B cell (primary cell): ENCODE measurements at regions of chr9 and their contacts with region 1.

Region 1: DNA sequence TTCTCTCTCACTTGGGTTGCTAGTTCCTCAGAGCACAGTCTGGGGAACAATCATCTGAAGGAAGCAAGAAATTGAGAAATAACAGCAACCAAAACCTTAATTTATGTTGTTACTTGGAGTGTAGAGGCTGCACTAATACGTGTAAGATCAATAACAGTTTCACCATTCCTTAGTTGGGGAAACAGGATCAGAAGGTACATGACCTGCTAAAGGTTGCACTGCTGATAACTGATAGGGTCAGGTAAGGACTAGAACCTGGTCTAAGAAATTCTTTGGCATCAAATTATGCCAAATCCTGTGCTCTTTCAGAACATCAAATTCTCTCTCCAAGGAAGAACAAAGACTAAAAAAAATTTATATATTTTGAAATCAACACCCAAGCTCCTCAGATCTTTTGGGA is 278.6 kb upstream of the C9orf72 start:
- DNase-seq: no peak
- ATAC-seq: no peak
- H3K4me3 ChIP-seq: no peak overlapping the region
- H3K4me3 Mint-ChIP-seq: no peak overlapping the region
- H3K27ac ChIP-seq: no peak overlapping the region
- H3K27ac Mint-ChIP-seq: no peak overlapping the region
- H3K4me1 ChIP-seq: no peaks in the 10 kb centered on the region
- H3K4me1 Mint-ChIP-seq: no peaks in the 10 kb centered on the region
- H3K27me3 ChIP-seq: no peaks in the 10 kb centered on the region
- H3K27me3 Mint-ChIP-seq: no peaks in the 10 kb centered on the region
- CTCF ChIP-seq: no peak

Region 2: GRCh38 chr9:27817747-27818146 is 34.1 kb before region 1 on chr9:
- CTCF ChIA-PET with region 1: no interaction called
- POLR2A ChIA-PET with region 1: no interaction called
- intact Hi-C with region 1: no loop called
- DNase-seq: no peak
- ATAC-seq: no peak
- H3K4me3 ChIP-seq: no peak overlapping the region
- H3K4me3 Mint-ChIP-seq: no peak overlapping the region
- H3K27ac ChIP-seq: no peak overlapping the region
- H3K27ac Mint-ChIP-seq: no peak overlapping the region
- H3K4me1 ChIP-seq: no peaks in the 10 kb centered on the region
- H3K4me1 Mint-ChIP-seq: no peaks in the 10 kb centered on the region
- H3K27me3 ChIP-seq: no peaks in the 10 kb centered on the region
- H3K27me3 Mint-ChIP-seq: no peaks in the 10 kb centered on the region
- CTCF ChIP-seq: no peak

Region 3: DNA sequence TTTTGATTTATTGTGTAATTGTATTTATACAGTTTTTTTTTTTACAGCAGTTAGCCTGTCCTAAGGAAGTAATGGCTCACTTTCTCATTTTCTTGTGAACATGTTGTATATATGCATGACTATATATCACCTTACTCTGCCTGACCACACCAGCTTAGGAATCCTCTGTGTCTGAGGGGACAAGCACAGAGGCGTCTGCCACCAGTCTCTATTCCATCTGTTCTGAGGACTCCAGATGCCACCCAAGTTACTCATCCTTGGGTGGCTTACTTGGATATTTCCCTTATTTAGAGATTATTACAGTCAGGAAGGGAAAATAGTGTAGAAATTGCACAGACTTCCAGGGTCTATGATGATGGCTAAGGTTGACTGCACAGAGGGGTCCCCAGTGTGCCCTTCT is 22.2 kb before region 1 on chr9:
- CTCF ChIA-PET with region 1: no interaction called
- POLR2A ChIA-PET with region 1: no interaction called
- intact Hi-C with region 1: loop called (anchors 2 kb)
- DNase-seq: no peak
- ATAC-seq: no peak
- H3K4me3 ChIP-seq: no peak overlapping the region
- H3K4me3 Mint-ChIP-seq: no peak overlapping the region
- H3K27ac ChIP-seq: no peak overlapping the region
- H3K27ac Mint-ChIP-seq: no peak overlapping the region
- H3K4me1 ChIP-seq: no peaks in the 10 kb centered on the region
- H3K4me1 Mint-ChIP-seq: no peaks in the 10 kb centered on the region
- H3K27me3 ChIP-seq: no peaks in the 10 kb centered on the region
- H3K27me3 Mint-ChIP-seq: peaks cover 4% of the 10 kb centered on the region
- CTCF ChIP-seq: no peak